Esophagus squamous epithelium (tissue), 5 donors: ENCODE measurements at regions of chr1 and their contacts with region 1.

Region 1: DNA sequence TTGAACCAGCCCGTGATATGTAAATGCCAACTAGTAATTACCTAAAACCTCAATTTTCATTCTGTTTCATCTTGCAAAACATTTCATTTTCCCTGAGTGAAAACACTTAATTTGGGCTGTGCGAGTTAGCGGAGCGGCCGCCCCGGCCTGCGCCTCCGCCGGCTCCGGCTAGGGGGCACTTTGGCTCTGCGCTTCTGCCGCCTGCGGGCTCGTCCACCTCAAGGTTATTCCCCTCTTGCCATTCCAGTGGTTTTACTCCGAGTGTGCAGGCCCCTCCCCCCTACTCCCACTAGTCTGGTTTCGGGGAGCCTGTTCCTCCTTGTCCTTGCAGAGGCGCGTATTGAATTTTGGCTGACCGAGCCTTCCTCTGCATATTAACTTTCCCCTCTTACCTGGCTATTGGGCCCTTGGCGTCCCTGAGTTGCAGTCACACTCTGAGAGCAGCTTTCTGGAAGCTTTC is 55.6 kb downstream of the PEX14 start:
- DNase-seq: no peak
- H3K4me3 ChIP-seq: no peak overlapping the region
- H3K27ac ChIP-seq: peak overlapping the region in 2 of 4 donors; percentile 69 to 77
- H3K4me1 ChIP-seq: peaks cover 8 to 32% (median 14%) of the 10 kb centered on the region in 3 donors
- H3K27me3 ChIP-seq: no peaks in the 10 kb centered on the region
- CTCF ChIP-seq: peak in 4 of 6 experiments; percentile 46 to 61 (median 58)
- POLR2A ChIP-seq: no peak

Region 2: DNA sequence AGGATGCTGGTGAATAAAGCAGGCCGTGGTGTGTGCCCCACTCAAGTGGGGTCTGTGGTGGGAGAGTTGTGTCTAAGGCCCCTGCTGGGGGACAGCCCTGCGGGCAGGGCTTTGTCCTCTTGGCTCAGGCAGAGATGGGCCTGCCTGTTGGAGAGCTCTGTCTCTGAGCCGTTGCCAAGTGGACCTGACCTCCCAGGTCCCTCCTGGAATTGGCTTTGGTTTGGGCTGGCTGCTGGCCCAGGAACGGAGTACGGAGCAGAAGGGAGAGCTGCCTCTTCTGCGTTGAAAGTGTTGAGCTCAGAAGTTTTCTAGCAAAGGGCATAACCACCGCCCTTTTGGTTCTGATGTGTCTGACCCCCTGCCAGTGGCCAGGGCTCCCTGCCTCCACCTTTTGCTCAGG is 98.4 kb after region 1 on chr1:
- intact Hi-C with region 1: loop called (anchors 10 kb)
- DNase-seq: no peak
- H3K4me3 ChIP-seq: no peak overlapping the region
- H3K27ac ChIP-seq: peak overlapping the region; percentile 43 to 93 (median 90)
- H3K4me1 ChIP-seq: peaks cover 0 to 49% (median 9%) of the 10 kb centered on the region in 3 donors
- H3K27me3 ChIP-seq: no peaks in the 10 kb centered on the region
- CTCF ChIP-seq: no peak
- POLR2A ChIP-seq: no peak